Naive thymus-derived CD4-positive, alpha-beta T cell (primary cell): ENCODE measurements at regions of chr10 and their contacts with region 1.

Region 1: DNA sequence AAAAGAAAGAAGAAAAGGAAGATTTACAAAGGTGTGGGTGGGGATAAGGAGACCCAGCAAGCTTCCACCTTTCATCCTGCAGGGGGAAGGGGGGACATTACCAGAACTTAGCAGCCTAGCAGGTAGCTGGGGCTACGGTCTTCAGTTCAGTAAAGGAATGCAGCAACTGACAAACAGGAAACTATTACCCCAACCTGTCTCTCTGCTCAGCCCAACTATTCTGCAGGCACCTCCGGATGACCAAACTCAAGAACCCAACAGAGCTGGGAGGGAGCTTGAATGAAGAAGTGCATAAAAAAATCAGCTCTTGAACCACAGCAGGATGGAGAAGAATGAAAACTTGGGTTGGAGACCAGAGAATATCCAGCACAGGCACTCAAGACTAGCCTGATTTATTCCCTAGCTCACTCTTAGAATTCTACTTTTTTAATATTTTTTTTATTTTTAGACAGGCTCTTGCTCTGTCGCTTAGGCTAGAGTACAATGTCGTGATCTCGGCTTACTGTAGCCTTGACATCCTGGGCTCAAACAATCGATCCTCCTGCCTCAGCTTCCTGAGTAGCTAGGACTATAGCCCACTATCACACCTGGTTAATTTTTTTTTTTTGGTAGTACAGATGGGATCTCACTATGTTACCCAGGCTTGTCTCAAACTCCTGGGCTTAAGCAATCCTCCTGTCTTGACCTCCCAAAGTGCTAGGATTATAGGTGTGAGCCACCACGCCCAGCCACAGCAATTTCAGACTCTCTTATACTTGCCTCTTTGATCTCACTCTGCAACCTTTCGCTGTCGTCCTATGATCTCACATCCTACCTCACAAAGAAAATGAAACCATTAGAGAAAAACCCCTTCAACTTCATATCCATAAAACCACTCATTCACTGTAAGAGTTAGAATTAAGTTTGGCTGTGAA is 18.5 kb upstream of the C10orf67 start:
- DNase-seq: peak in 8 of 9 donors; percentile 51 to 77 (median 68)
- ATAC-seq: peak; percentile 90
- H3K4me3 ChIP-seq: peak overlapping the region; percentile 22
- H3K4me3 Mint-ChIP-seq: peak overlapping the region; percentile 60 to 90 (median 78)
- H3K27ac ChIP-seq: peak overlapping the region; percentile 68
- H3K27ac Mint-ChIP-seq: peak overlapping the region; percentile 78 to 98 (median 92)
- H3K4me1 ChIP-seq: peaks cover 30 to 33% of the 10 kb centered on the region in 2 donors
- H3K4me1 Mint-ChIP-seq: peaks cover 34 to 61% (median 49%) of the 10 kb centered on the region in 7 donors
- H3K27me3 ChIP-seq: no peaks in the 10 kb centered on the region
- H3K27me3 Mint-ChIP-seq: no peaks in the 10 kb centered on the region

Region 2: DNA sequence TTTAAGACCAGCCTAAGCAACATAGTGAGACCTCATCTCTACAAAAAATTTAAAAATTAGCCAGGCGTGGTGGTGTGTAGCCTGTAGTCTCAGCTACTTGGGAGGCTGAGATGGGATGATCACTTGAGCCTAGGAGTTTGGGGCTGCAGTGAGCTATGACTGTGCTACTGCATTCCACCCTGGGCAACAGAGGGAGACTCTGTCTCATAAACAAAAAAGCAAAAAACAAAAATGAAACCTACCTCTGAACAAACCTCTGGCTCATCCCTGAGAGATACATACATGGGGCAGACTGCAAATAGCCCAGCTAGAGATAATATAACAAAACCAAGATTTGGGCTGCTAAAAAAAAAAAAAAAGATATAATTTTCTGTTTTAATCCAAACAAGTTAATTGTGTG is 38.0 kb before region 1 on chr10:
- CTCF ChIA-PET with region 1: no interaction called
- POLR2A ChIA-PET with region 1: no interaction called
- intact Hi-C with region 1: loop called (anchors 5 kb)
- DNase-seq: no peak
- ATAC-seq: peak; percentile 24
- H3K4me3 ChIP-seq: no peak overlapping the region
- H3K4me3 Mint-ChIP-seq: no peak overlapping the region
- H3K27ac ChIP-seq: no peak overlapping the region
- H3K27ac Mint-ChIP-seq: no peak overlapping the region
- H3K4me1 ChIP-seq: no peaks in the 10 kb centered on the region
- H3K4me1 Mint-ChIP-seq: peaks cover 0 to 3% (median 0%) of the 10 kb centered on the region in 7 donors
- H3K27me3 ChIP-seq: no peaks in the 10 kb centered on the region
- H3K27me3 Mint-ChIP-seq: peaks cover 0 to 16% (median 4%) of the 10 kb centered on the region in 5 donors

Region 3: GRCh38 chr10:23344241-23344841 is 18.8 kb before region 1 on chr10 and contains the start of gene C10orf67:
- CTCF ChIA-PET with region 1: no interaction called
- POLR2A ChIA-PET with region 1: interaction called, 6 read pairs
- intact Hi-C with region 1: loop called (anchors 1 kb)
- DNase-seq: peak in 4 of 9 donors; percentile 22 to 41 (median 28)
- ATAC-seq: peak; percentile 45
- H3K4me3 ChIP-seq: peak within 1 kb of the TSS; percentile 64
- H3K4me3 Mint-ChIP-seq: peak within 1 kb of the TSS; percentile 84 to 95 (median 92)
- H3K27ac ChIP-seq: peak within 1 kb of the TSS; percentile 27
- H3K27ac Mint-ChIP-seq: peak within 1 kb of the TSS; percentile 41 to 83 (median 81)
- H3K4me1 ChIP-seq: peaks cover 0 to 6% of the 10 kb centered on the region in 2 donors
- H3K4me1 Mint-ChIP-seq: peaks cover 24 to 50% (median 44%) of the 10 kb centered on the region in 7 donors
- H3K27me3 ChIP-seq: no peaks in the 10 kb centered on the region
- H3K27me3 Mint-ChIP-seq: peaks cover 0 to 19% (median 0%) of the 10 kb centered on the region in 5 donors
- total RNA-seq, gene C10orf67: not detected

Region 4: GRCh38 chr10:23376229-23376655 is 13.1 kb after region 1 on chr10:
- CTCF ChIA-PET with region 1: no interaction called
- POLR2A ChIA-PET with region 1: no interaction called
- intact Hi-C with region 1: loop called in 1 of 2 experiments (anchors 2 kb)
- DNase-seq: no peak
- ATAC-seq: peak; percentile 46
- H3K4me3 ChIP-seq: no peak overlapping the region
- H3K4me3 Mint-ChIP-seq: no peak overlapping the region
- H3K27ac ChIP-seq: no peak overlapping the region
- H3K27ac Mint-ChIP-seq: no peak overlapping the region
- H3K4me1 ChIP-seq: no peaks in the 10 kb centered on the region
- H3K4me1 Mint-ChIP-seq: peaks cover 0 to 31% (median 1%) of the 10 kb centered on the region in 7 donors
- H3K27me3 ChIP-seq: no peaks in the 10 kb centered on the region
- H3K27me3 Mint-ChIP-seq: peaks cover 0 to 1% (median 0%) of the 10 kb centered on the region in 5 donors